ENCODE measurements at regions of chr17 and their contacts with region 1.

Region 1: GRCh38 chr17:39235555-39236449 is 10.1 kb upstream of the STAC2 start:
- DNase-seq: peak; percentile 79
- ATAC-seq: peak; percentile 85
- H3K4me3 Mint-ChIP-seq: peak overlapping the region; percentile 35; the same call in 1 of the 2 replicates
- H3K27ac Mint-ChIP-seq: peak overlapping the region; percentile 80; the same call in 1 of the 2 replicates
- H3K4me1 Mint-ChIP-seq: peaks cover 25% of the 10 kb centered on the region
- H3K27me3 Mint-ChIP-seq: peaks cover 6% of the 10 kb centered on the region; the same call in 1 of the 2 replicates
- CTCF ChIP-seq: peak; percentile 94

Region 2: GRCh38 chr17:38996660-38997337 is 239.0 kb before region 1 on chr17:
- CTCF ChIA-PET with region 1: no interaction called
- POLR2A ChIA-PET with region 1: no interaction called
- DNase-seq: no peak
- ATAC-seq: no peak
- H3K4me3 Mint-ChIP-seq: no peak overlapping the region
- H3K27ac Mint-ChIP-seq: no peak overlapping the region
- H3K4me1 Mint-ChIP-seq: peaks cover 2% of the 10 kb centered on the region
- H3K27me3 Mint-ChIP-seq: peaks cover 4% of the 10 kb centered on the region
- CTCF ChIP-seq: no peak

Region 3: DNA sequence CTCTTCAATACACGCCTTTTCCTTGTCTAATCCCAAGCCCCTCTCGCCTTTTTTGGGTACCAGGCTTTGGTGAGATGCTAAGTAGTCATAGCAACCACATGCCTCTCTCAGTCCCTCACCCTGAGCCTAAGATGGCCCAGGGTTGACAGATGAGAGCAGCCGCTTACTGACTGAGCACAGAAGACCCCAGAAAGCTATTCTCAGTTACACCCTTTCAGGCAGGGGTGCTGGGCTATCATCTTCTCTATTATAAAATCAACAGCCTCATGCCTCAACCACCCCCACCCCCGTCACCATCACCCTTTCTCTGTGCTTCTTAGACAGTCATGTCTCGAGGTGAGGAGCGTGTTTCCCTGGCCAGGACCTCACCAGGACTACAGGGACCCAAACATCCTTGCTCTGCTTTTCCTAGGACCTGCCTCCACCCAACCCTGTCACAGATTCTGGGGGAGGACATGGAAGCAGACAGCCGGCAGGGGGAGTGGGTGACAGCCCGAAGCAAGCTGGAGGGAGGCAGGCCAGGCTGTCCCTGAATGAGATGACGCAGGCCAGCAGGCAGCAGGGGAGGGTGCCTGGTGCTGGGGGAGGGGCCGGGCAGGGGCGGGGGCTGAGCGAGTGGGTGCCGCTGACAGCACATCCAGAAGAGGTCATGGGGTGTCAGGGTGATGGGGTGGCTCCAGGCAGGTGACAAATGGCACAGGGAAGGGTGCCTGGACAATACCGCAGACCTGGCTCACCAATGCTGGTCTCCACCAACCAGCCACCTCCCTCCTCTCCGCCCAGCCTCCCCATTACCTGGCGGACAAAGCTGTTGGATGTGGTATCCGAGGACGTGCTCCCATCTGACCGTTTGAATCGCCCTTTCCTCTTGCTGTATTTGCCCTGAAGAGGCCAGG is 41.5 kb before region 1 on chr17:
- CTCF ChIA-PET with region 1: interaction called, 29 read pairs
- POLR2A ChIA-PET with region 1: interaction called, 5 read pairs
- DNase-seq: peak; percentile 73
- ATAC-seq: peak; percentile 51
- H3K4me3 Mint-ChIP-seq: peak overlapping the region; percentile 66
- H3K27ac Mint-ChIP-seq: peak overlapping the region; percentile 57; the same call in 1 of the 2 replicates
- H3K4me1 Mint-ChIP-seq: peaks cover 36% of the 10 kb centered on the region
- H3K27me3 Mint-ChIP-seq: no peaks in the 10 kb centered on the region
- CTCF ChIP-seq: peak; percentile 12; the same call in 1 of the 2 replicates

Region 4: DNA sequence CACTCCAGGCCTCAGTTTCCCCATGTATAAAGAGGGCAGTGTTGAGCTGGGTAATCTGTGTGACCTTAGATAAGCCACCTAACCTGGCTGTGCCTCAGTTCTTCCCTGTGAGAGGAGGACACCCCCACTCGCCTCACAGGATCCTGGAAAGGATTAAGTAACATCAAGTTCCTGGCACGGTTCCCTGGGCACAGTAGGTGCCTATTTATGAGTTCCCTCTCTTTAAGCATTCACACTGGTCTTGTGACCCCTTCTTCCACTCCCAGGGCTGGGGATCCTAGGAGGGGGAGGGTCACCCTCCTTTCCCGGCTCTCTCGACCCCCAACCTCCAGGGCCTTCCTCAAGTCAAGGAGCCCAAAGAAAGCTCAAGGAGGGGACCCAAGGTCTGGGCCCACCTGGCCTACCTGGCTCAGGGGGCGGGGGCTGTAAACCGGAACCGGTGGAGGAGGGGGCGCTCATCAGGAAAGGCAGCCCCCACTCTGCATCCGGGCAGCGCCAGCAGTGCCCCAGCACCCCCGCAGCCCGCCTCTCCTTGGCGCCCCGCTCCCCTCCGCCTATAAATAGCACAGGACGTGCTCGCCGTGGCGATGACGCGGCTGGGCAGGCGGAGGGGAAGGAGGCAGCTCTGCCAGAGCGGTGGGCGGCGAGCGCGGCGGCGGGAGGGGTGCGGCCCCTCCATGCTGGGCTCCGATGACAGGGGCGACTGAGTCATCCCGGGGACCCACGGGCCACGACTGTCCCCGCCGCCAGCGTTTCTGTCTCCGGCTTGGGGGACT is 26.3 kb before region 1 on chr17:
- CTCF ChIA-PET with region 1: interaction called, 626 read pairs
- POLR2A ChIA-PET with region 1: interaction called, 4 read pairs
- DNase-seq: peak; percentile 61
- ATAC-seq: peak; percentile 8
- H3K4me3 Mint-ChIP-seq: peak overlapping the region; percentile 64
- H3K27ac Mint-ChIP-seq: no peak overlapping the region
- H3K4me1 Mint-ChIP-seq: peaks cover 47% of the 10 kb centered on the region
- H3K27me3 Mint-ChIP-seq: peaks cover 7% of the 10 kb centered on the region
- CTCF ChIP-seq: no peak

Region 5: GRCh38 chr17:39261286-39261685 is 25.5 kb after region 1 on chr17:
- CTCF ChIA-PET with region 1: interaction called, 10 read pairs
- POLR2A ChIA-PET with region 1: no interaction called
- DNase-seq: peak; percentile 79
- ATAC-seq: peak; percentile 88
- H3K4me3 Mint-ChIP-seq: no peak overlapping the region
- H3K27ac Mint-ChIP-seq: peak overlapping the region; percentile 89
- H3K4me1 Mint-ChIP-seq: peaks cover 5% of the 10 kb centered on the region
- H3K27me3 Mint-ChIP-seq: no peaks in the 10 kb centered on the region
- CTCF ChIP-seq: peak; percentile 54

Region 6: DNA sequence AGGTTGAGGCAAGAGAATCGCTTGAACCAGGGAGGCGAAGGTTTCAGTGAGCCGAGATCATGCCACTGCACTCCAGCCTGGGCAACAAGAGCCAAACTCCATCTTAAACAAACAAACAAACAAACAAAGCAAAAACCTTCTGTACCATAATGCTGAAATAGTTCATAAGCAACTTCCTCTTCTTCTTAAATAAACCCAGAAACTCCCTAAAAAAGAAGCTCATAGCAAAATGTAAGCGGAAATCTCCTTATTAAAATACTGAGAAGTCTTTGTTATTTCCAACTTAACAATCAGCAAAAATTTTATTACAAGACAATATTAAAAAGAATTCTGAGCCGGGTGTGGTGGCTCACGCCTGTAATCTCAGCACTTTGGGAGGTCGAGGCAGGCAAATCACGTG is 82.8 kb after region 1 on chr17:
- CTCF ChIA-PET with region 1: no interaction called
- POLR2A ChIA-PET with region 1: no interaction called
- DNase-seq: no peak
- ATAC-seq: no peak
- H3K4me3 Mint-ChIP-seq: no peak overlapping the region
- H3K27ac Mint-ChIP-seq: no peak overlapping the region
- H3K4me1 Mint-ChIP-seq: no peaks in the 10 kb centered on the region
- H3K27me3 Mint-ChIP-seq: no peaks in the 10 kb centered on the region; the same call in 1 of the 2 replicates
- CTCF ChIP-seq: no peak

Region 7: DNA sequence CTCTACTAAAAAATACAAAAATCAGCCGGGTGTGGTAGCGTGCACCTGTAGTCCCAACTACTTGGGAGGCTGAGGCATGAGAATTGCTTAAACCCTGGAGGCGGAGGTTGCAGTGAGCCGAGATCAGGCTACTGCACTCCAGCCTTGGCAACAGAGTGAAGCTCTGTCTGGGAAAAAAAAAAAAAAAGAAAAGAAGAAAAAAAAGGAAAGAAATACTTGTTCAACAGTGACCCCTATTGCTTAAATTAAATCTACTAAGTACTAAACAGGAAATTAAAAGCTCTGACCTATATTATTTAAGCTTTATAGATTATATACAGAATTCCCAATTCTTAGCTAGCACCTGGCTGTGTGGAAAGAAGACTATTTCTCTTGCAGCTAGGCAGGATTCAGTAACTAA is 116.7 kb after region 1 on chr17:
- CTCF ChIA-PET with region 1: interaction called, 10 read pairs
- POLR2A ChIA-PET with region 1: no interaction called
- DNase-seq: no peak
- ATAC-seq: no peak
- H3K4me3 Mint-ChIP-seq: no peak overlapping the region
- H3K27ac Mint-ChIP-seq: no peak overlapping the region; the same call in 1 of the 2 replicates
- H3K4me1 Mint-ChIP-seq: no peaks in the 10 kb centered on the region
- H3K27me3 Mint-ChIP-seq: no peaks in the 10 kb centered on the region; the same call in 1 of the 2 replicates
- CTCF ChIP-seq: no peak